HEK293 (cell line): ENCODE measurements at regions of chr1 and their contacts with region 1.

Region 1: DNA sequence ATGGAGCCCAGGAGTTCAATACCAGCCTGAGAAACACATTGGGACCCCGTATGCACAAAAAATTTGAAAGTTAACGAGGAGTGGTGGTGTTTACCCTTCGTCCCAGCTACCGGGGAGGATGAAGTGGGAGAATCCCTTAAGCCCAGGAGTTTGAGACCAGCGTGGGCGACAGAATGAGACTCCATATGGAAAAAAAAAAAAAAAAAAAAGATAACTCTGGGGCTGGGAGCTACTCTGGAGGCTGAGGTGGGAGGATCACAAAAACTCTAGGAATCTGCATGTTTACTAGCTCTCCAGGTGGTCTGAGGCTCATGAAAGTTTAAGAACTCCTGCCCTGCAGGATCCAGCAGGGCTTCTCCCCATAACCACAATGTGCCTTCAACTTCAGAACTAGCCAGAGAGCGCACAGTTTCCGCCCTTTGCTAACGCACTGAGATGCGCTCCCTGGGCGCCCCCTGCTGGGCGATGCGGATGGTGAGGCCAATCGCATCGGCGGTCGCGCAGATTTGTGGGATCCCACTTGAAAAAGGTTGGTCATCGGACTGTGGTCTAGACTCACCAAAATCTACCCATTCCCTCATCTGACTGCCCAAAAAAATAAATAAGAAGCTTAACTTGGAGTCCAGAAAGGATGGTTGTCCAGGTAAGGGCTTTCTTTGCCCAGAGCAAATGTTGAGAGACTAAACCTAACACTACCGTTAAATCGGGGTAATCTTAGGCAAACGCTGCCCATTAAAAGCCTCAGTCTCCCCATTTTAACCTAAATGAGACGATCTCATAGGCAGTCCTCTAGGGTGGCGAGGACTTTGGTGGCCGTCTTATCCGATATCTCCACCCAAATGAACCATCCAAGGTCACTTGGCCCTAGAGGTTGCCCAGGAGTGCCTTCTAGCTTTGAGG is 8.8 kb downstream of the ZNF683 start:
- H3K4me3 ChIP-seq: no peak overlapping the region
- H3K27ac ChIP-seq: no peak overlapping the region
- H3K4me1 ChIP-seq: no peaks in the 10 kb centered on the region
- CTCF ChIP-seq: peak; percentile 79

Region 2: GRCh38 chr1:26279456-26280332 is 84.1 kb before region 1 on chr1 and contains the start of gene SH3BGRL3:
- CTCF ChIA-PET with region 1: interaction called, 28 read pairs
- POLR2A ChIA-PET with region 1: no interaction called
- H3K4me3 ChIP-seq: peak within 1 kb of the TSS; percentile 63
- H3K27ac ChIP-seq: 0 out of 2 replicates have a peak within 1 kb of the TSS, but pooled peaks have one; percentile 7
- H3K4me1 ChIP-seq: 0 out of 2 replicates have a peak, but pooled peaks cover 3% of the 10 kb centered on the region
- CTCF ChIP-seq: peak; percentile 92

Region 3: DNA sequence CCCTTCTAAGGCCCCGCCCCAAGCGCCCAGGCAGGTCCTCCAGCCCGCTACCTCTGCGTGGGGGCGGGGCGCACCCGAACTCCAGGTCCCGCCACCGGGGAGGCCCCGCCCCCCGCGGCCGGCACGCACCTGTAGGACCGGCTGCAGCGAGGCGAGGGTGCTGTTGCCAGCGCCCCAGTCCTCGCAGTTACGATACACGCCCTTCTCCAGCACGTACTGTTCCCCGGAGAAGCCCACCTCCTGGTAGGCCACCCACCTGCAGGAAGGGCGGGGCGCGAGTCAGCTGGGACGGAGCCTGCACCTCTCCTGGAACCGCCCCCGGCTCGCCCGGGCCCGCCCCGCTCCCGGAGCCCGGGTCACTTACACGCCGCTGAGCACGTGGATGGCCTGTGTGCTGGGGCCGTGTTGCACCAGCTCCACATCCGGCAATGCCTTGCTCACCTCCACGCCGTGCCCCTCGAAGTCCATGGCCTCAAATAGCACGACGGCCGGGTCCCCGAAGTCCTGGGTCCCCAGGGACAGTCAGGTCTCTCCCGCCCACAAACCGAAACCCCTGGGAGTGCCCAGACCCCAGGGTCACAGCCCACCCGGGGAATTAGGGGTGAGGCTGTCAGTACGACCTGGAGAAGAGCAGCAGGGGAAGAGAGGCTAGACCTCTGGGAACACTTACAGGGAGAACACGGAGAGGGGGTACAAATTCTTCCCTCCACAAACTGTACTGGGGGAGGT is 27.2 kb before region 1 on chr1:
- CTCF ChIA-PET with region 1: interaction called, 13 read pairs
- POLR2A ChIA-PET with region 1: no interaction called
- H3K4me3 ChIP-seq: peak overlapping the region; percentile 76
- H3K27ac ChIP-seq: no peak overlapping the region; the same call in 1 of the 2 replicates
- H3K4me1 ChIP-seq: no peaks in the 10 kb centered on the region
- CTCF ChIP-seq: no peak

Region 4: DNA sequence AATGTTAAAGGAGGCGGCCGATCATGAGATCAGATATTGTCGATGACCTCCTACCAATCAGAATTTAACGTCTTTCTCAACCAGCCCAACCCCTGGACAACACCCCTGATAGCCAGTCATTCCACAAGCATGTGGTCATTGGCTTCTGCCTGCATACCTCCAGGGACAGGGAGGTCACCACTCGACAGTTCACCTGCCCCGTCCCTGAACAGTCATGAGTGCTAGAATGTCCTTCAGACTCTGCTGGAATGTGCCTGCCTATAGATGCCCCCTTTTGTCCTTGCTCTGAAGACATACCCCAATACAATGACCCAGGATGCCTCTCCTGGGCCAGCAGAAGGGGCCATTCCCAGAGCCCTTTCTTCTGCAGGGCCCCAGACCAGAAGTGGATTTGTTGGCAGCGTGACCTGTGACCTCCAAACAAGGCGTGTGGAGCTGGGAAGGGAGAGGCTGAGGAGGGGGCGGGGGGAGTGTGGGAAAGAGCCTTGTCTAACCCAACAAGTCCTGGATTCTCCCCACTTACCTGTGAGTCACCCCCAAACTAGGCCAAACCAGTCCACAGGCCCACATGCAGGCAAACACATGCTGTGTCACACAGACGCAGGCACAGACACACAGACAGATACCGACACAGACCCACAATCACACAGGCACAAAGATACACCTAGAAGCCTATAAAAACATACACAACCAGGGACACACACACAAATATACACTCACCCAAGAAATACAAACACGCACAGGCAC is 12.0 kb before region 1 on chr1:
- CTCF ChIA-PET with region 1: interaction called, 26 read pairs
- POLR2A ChIA-PET with region 1: no interaction called
- H3K4me3 ChIP-seq: no peak overlapping the region
- H3K27ac ChIP-seq: no peak overlapping the region
- H3K4me1 ChIP-seq: no peaks in the 10 kb centered on the region
- CTCF ChIP-seq: no peak

Region 5: GRCh38 chr1:26391450-26391849 is 27.7 kb after region 1 on chr1:
- CTCF ChIA-PET with region 1: interaction called, 10 read pairs
- POLR2A ChIA-PET with region 1: no interaction called
- H3K4me3 ChIP-seq: no peak overlapping the region
- H3K27ac ChIP-seq: no peak overlapping the region
- H3K4me1 ChIP-seq: no peaks in the 10 kb centered on the region
- CTCF ChIP-seq: peak; percentile 70